IMR-90 (cell line): ENCODE measurements at regions of chr6 and their contacts with region 1.

Region 1: DNA sequence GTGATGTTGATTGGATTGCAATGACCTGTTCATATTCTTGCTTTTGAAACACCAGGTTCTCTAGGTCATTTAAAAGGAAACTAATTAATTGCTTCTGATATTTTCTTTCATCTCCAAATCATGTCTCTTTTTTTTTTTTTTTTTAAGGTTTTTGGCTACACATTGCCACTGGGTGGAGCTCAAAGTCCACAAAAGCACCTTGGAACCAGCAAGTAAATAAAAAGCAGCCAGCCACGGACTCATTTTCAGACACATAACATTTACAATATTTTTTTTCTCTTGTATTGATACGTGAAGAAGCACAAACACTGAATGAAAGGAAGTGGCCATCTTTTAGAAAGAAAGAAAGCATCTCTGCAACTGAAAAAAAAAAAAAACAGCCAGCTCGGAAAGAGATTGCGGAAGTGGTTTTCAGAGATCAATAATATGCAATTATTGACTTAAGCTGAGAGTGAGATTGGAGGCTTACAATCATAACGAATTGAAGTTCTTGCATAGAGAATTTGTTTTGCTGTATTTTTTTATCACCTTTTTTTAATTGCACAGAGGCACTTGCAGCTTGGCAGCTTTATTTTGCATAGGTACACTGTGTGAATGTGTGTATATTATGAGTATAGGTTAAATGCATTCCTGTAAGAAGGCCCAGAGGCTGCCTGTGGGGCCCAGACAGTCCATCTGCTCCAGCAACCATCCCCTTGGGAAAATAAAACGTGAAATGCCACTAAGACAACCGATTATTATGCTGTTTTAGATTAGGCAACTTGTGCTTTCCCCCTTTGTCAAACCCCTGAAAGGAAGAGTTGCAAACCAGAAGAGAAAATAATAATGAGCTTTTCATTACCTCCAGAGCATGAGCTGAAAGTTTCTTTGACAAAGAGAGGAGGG is 28.2 kb downstream of the CGA start:
- DNase-seq: peak; percentile 72
- ATAC-seq: peak; percentile 56; the same call in 1 of the 2 replicates
- H3K4me3 ChIP-seq: no peak overlapping the region
- H3K27ac ChIP-seq: no peak overlapping the region
- H3K4me1 ChIP-seq: no peaks in the 10 kb centered on the region
- H3K27me3 ChIP-seq: peaks cover 8% of the 10 kb centered on the region
- CTCF ChIP-seq: peak; percentile 78
- POLR2A ChIP-seq: 0 out of 2 replicates have a peak, but pooled peaks have one; percentile 22
- RAD21 ChIP-seq: peak; percentile 89

Region 2: GRCh38 chr6:86973088-86973487 is 93.6 kb before region 1 on chr6:
- CTCF ChIA-PET with region 1: no interaction called
- POLR2A ChIA-PET with region 1: no interaction called
- dilution Hi-C with region 1: no loop called
- in situ Hi-C with region 1: no loop called
- intact Hi-C with region 1: no loop called
- DNase-seq: no peak
- ATAC-seq: no peak
- H3K4me3 ChIP-seq: no peak overlapping the region
- H3K27ac ChIP-seq: no peak overlapping the region
- H3K4me1 ChIP-seq: no peaks in the 10 kb centered on the region
- H3K27me3 ChIP-seq: no peaks in the 10 kb centered on the region
- CTCF ChIP-seq: no peak
- POLR2A ChIP-seq: no peak
- RAD21 ChIP-seq: no peak

Region 3: DNA sequence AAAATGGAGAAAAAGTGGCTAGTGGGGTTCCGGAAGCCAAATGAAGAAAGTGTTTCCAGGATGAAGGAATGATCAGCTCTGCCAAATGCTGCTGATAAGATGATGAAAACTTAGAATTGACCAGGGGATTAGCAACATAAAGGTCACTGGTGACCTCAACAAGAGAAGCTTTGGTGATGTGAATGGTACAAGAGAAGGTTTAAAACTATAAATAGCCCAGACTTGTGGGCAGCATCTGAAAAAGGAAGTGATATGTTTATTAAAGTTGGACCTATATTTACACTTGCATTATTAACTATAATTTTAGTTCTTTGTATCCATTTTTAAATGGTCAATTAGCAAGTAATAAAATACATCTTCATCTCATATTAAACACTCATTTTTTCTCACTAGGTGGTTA is 16.9 kb before region 1 on chr6:
- CTCF ChIA-PET with region 1: no interaction called
- POLR2A ChIA-PET with region 1: no interaction called
- dilution Hi-C with region 1: no loop called
- in situ Hi-C with region 1: no loop called
- intact Hi-C with region 1: no loop called
- DNase-seq: no peak
- ATAC-seq: no peak
- H3K4me3 ChIP-seq: no peak overlapping the region
- H3K27ac ChIP-seq: no peak overlapping the region
- H3K4me1 ChIP-seq: no peaks in the 10 kb centered on the region
- H3K27me3 ChIP-seq: no peaks in the 10 kb centered on the region
- CTCF ChIP-seq: no peak
- POLR2A ChIP-seq: no peak
- RAD21 ChIP-seq: no peak

Region 4: DNA sequence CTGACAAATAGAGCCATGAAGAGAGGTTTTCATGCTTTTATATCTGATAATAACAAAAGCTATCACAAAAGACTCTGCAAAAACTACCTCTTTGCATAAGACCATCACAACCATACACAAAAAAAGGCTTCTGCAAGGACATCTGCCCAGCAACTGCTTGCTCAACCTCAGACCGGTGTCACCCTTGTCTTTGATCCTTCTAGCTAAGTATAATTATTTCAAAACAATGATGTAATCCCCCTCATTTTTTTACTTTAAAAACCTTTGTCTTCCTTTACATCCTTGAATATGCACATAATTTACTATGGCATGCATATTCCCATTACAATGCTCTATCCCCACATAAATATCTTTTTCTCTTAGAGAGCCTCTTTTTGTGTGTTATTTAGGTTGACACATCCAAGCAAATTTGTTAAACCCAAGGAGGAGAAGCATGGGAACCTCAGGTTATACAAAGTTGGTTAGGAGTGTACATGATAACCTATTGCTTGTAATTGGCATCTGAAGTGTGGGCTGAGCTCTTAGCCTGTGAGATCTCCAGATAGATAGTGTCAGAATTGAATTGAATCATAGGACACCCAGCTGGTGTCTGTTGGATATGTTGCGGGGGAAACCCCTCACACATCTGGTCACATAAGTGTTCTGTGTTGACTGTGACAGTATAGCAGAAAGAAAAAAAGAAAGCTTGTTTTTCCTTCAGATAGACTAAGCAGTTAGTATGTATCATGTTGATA is 48.9 kb after region 1 on chr6:
- CTCF ChIA-PET with region 1: no interaction called
- POLR2A ChIA-PET with region 1: no interaction called
- dilution Hi-C with region 1: no loop called
- in situ Hi-C with region 1: no loop called
- intact Hi-C with region 1: no loop called
- DNase-seq: no peak
- ATAC-seq: no peak
- H3K4me3 ChIP-seq: no peak overlapping the region
- H3K27ac ChIP-seq: no peak overlapping the region
- H3K4me1 ChIP-seq: no peaks in the 10 kb centered on the region
- H3K27me3 ChIP-seq: peaks cover 2% of the 10 kb centered on the region; the same call in 1 of the 2 replicates
- CTCF ChIP-seq: no peak
- POLR2A ChIP-seq: no peak
- RAD21 ChIP-seq: no peak

Region 5: DNA sequence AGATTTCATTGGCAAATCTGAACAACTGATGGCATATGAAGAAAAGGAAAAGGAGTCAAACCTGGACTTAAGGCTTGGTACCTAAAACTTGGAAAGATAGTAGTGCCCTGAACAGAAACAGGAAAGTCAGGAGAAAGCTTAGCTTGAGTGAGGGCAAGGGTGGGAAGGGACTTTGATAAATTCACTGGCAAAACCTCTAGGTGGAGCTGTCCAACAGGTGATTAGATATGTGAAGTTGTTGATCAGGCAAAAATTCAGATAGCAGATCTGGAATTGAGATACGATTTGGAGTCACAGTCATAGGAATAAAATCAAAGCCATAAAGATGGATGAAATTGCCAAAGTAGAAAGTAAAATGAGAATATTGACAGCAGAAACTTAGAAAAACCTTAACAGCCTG is 72.5 kb after region 1 on chr6:
- CTCF ChIA-PET with region 1: interaction called, 3 read pairs
- POLR2A ChIA-PET with region 1: no interaction called
- dilution Hi-C with region 1: no loop called
- in situ Hi-C with region 1: no loop called
- intact Hi-C with region 1: loop called (anchors 5 kb)
- DNase-seq: peak; percentile 62
- ATAC-seq: peak; percentile 79
- H3K4me3 ChIP-seq: no peak overlapping the region
- H3K27ac ChIP-seq: no peak overlapping the region
- H3K4me1 ChIP-seq: no peaks in the 10 kb centered on the region
- H3K27me3 ChIP-seq: peaks cover 2% of the 10 kb centered on the region
- CTCF ChIP-seq: peak; percentile 71
- POLR2A ChIP-seq: no peak
- RAD21 ChIP-seq: peak; percentile 81

Region 6: GRCh38 chr6:87277123-87277522 is 210.4 kb after region 1 on chr6:
- CTCF ChIA-PET with region 1: interaction called, 10 read pairs
- POLR2A ChIA-PET with region 1: no interaction called
- dilution Hi-C with region 1: no loop called
- in situ Hi-C with region 1: no loop called
- intact Hi-C with region 1: no loop called
- DNase-seq: peak; percentile 15
- ATAC-seq: no peak
- H3K4me3 ChIP-seq: no peak overlapping the region
- H3K27ac ChIP-seq: no peak overlapping the region
- H3K4me1 ChIP-seq: peaks cover 2% of the 10 kb centered on the region
- H3K27me3 ChIP-seq: no peaks in the 10 kb centered on the region
- CTCF ChIP-seq: 0 out of 2 replicates have a peak, but pooled peaks have one; percentile 16
- POLR2A ChIP-seq: no peak
- RAD21 ChIP-seq: no peak

Region 7: DNA sequence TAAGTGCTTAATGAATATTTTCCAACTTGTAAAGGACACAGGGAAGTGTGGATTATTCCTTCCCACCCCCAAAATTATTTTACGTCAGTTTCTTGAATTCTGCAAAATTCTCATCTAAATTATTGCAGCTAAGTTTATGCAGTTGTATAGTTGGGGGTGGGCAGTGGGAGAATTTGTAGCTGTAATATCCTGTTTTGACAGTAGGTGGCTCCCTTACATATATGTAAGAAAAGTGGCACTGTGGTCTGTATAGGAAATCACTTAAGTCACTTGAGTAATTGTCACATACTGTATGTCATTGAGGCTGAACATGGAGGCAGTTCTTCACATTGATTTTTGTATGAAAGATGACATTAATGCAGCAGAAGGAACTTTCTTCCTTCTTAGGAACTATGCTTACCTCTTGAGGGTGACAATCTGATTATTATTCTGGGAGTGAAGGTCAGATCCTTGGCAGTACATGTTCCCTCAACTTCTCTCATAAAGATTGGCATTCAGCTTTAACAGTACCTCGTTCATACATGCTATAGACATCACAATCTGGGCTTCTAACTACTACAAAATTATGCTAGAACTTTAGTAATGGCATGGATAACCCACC is 326.4 kb after region 1 on chr6:
- CTCF ChIA-PET with region 1: interaction called, 3 read pairs
- POLR2A ChIA-PET with region 1: no interaction called
- dilution Hi-C with region 1: no loop called
- in situ Hi-C with region 1: loop called (anchors 10 kb)
- intact Hi-C with region 1: loop called (anchors 1 kb)
- DNase-seq: peak; percentile 70
- ATAC-seq: peak; percentile 96
- H3K4me3 ChIP-seq: no peak overlapping the region
- H3K27ac ChIP-seq: no peak overlapping the region
- H3K4me1 ChIP-seq: no peaks in the 10 kb centered on the region
- H3K27me3 ChIP-seq: no peaks in the 10 kb centered on the region
- CTCF ChIP-seq: peak; percentile 71
- POLR2A ChIP-seq: no peak
- RAD21 ChIP-seq: peak; percentile 64

Region 8: DNA sequence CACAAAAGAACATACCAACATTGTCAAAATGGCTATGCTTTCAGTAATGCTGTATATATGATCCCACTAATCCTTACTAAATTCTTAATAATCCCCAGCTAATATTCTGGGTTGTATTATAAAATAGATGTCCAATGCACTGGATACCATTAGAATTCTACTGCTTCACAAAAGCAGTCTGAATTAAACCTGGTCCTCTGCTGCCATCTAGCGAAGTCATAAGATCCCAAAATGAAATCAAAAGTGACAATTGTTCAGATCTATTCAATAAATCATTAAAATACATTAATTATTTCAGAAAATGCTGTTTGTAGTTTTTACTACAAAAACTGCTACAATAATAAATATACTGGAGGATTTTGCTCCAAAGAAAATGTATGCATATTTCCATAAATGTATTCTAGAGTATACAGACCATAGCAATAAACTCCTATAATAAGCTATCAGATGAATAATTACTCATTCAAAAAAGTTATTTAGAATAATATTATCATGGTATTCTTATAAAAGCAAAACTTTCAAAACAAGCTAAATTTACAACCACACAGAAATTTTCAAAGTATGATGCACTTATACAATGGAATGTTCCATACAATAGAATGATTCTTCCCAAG is 1804.1 kb after region 1 on chr6:
- CTCF ChIA-PET with region 1: no interaction called
- POLR2A ChIA-PET with region 1: no interaction called
- dilution Hi-C with region 1: no loop called
- in situ Hi-C with region 1: no loop called
- intact Hi-C with region 1: loop called (anchors 5 kb)
- DNase-seq: peak; percentile 74
- ATAC-seq: no peak
- H3K4me3 ChIP-seq: no peak overlapping the region
- H3K27ac ChIP-seq: no peak overlapping the region
- H3K4me1 ChIP-seq: peaks cover 7% of the 10 kb centered on the region
- H3K27me3 ChIP-seq: no peaks in the 10 kb centered on the region
- CTCF ChIP-seq: peak; percentile 77
- POLR2A ChIP-seq: no peak
- RAD21 ChIP-seq: peak; percentile 81